ENCODE measurements at regions of chr3 and their contacts with region 1.

Region 1: DNA sequence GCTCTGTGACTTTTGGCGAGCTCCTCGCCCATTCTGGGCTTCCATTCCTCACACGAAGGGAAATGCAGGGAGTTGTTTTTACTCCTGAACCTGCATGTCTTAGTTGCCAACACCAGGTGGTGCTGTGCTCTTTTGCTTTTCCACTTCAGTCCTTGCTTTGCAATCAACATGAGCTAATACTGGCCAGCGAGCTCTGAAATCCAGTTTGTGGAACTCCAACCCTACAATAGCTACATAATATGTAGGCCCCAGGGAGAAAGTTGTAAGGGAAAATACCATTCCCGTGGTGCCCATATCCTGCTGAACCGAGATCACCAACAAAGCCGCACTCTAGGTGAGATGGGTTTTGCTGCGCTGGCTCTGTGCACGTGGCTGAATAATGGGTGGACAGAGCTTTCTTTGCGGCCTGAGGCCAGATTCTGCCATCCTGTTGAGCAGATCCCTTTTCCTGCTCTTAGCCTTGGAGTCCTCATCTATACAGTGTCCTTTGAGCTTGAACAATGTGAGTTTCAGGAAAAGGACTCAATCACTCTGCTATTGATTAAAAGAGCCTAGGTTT is 25.0 kb downstream of the LSM3 start:
- DNase-seq: peak; percentile 66
- H3K4me3 ChIP-seq: no peak overlapping the region
- H3K27ac ChIP-seq: no peak overlapping the region
- H3K4me1 ChIP-seq: peaks cover 48% of the 10 kb centered on the region
- H3K27me3 ChIP-seq: no peaks in the 10 kb centered on the region
- CTCF ChIP-seq: peak; percentile 91 to 93

Region 2: GRCh38 chr3:14154895-14155440 is 48.6 kb before region 1 on chr3:
- CTCF ChIA-PET with region 1: no interaction called
- dilution Hi-C with region 1: loop called (anchors 5 kb)
- in situ Hi-C with region 1: no loop called
- intact Hi-C with region 1: no loop called
- DNase-seq: no peak
- H3K4me3 ChIP-seq: no peak overlapping the region
- H3K27ac ChIP-seq: no peak overlapping the region
- H3K4me1 ChIP-seq: peaks cover 30% of the 10 kb centered on the region
- H3K27me3 ChIP-seq: no peaks in the 10 kb centered on the region
- CTCF ChIP-seq: no peak

Region 3: DNA sequence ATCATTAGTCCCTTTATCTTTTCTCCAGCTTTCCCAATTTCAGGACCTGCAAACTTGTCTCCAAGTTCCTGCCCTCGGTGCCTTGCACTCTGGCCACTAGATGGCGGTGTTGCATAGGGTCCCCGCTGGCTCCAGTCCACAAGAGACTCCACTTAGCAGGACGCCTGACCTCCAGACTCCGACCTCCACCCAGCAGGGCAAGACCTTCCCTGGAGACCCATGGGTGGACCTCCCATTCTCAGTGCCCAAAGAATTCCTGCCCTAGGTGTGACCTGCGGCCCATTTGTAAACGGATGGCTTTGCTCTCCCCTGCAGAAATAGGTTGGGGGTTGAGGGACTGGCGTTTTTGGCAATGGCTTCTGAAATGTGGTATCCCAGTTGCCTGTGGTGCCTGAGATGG is 57.6 kb after region 1 on chr3:
- CTCF ChIA-PET with region 1: interaction called, 19 read pairs
- dilution Hi-C with region 1: no loop called
- in situ Hi-C with region 1: no loop called
- intact Hi-C with region 1: loop called (anchors 1 kb)
- DNase-seq: peak; percentile 46
- H3K4me3 ChIP-seq: no peak overlapping the region
- H3K27ac ChIP-seq: no peak overlapping the region
- H3K4me1 ChIP-seq: peaks cover 7% of the 10 kb centered on the region
- H3K27me3 ChIP-seq: no peaks in the 10 kb centered on the region
- CTCF ChIP-seq: peak; percentile 98

Region 4: DNA sequence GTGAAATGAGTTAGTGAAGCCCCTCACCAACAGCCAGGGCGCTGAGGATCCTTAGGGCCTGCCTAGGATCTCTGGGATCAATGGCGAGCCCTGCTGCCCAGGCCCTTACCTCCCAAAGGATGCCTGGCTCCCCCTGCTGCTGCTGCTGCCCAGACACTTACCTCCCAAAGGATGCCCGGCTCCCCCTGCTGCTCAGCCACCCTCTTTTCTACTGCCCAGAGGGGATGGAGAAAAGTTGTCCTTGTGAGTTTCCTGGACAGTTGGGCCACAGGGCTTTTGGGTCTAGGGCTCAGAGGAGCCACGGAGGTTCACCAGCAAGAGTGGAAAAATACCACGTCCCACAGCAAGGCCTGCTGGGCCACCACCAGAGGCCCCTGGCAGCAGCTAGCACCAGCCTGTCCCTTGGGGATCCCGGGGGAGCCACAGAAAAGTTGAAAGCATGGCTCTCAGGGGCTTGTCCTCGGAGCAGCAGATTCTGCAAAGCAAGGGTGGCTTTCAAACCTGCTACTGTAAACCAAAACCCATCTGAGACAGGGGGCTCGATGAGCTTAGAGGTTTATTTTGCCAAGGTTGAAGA is 258.2 kb after region 1 on chr3:
- CTCF ChIA-PET with region 1: interaction called, 3 read pairs
- dilution Hi-C with region 1: no loop called
- in situ Hi-C with region 1: loop called (anchors 5 to 10 kb)
- intact Hi-C with region 1: loop called (anchors 1 kb)
- DNase-seq: peak; percentile 44
- H3K4me3 ChIP-seq: no peak overlapping the region
- H3K27ac ChIP-seq: no peak overlapping the region
- H3K4me1 ChIP-seq: peaks cover 4% of the 10 kb centered on the region
- H3K27me3 ChIP-seq: no peaks in the 10 kb centered on the region
- CTCF ChIP-seq: peak; percentile 68 to 96

Region 5: GRCh38 chr3:14508961-14509795 is 305.6 kb after region 1 on chr3:
- CTCF ChIA-PET with region 1: no interaction called
- dilution Hi-C with region 1: no loop called
- in situ Hi-C with region 1: no loop called
- intact Hi-C with region 1: loop called (anchors 1 kb)
- DNase-seq: no peak
- H3K4me3 ChIP-seq: peak overlapping the region in 1 of 3 experiments; percentile 11
- H3K27ac ChIP-seq: no peak overlapping the region
- H3K4me1 ChIP-seq: peaks cover 2% of the 10 kb centered on the region
- H3K27me3 ChIP-seq: no peaks in the 10 kb centered on the region
- CTCF ChIP-seq: peak; percentile 67 to 86

Measured in mammary epithelial cell (primary cell).